Lower leg skin (tissue), 4 donors: ENCODE measurements at regions of chr2 and their contacts with region 1.

Region 1: GRCh38 chr2:222707689-222708525 is 36.4 kb downstream of the MOGAT1 start:
- DNase-seq: peak; percentile 59 to 97
- H3K4me3 ChIP-seq: no peak overlapping the region
- CTCF ChIP-seq: peak in 1 of 3 donors; percentile 84
- POLR2A ChIP-seq: no peak

Region 2: GRCh38 chr2:221289389-221289788 is 1418.5 kb before region 1 on chr2:
- intact Hi-C with region 1: no loop called
- DNase-seq: no peak
- H3K4me3 ChIP-seq: no peak overlapping the region
- CTCF ChIP-seq: no peak
- POLR2A ChIP-seq: no peak

Region 3: DNA sequence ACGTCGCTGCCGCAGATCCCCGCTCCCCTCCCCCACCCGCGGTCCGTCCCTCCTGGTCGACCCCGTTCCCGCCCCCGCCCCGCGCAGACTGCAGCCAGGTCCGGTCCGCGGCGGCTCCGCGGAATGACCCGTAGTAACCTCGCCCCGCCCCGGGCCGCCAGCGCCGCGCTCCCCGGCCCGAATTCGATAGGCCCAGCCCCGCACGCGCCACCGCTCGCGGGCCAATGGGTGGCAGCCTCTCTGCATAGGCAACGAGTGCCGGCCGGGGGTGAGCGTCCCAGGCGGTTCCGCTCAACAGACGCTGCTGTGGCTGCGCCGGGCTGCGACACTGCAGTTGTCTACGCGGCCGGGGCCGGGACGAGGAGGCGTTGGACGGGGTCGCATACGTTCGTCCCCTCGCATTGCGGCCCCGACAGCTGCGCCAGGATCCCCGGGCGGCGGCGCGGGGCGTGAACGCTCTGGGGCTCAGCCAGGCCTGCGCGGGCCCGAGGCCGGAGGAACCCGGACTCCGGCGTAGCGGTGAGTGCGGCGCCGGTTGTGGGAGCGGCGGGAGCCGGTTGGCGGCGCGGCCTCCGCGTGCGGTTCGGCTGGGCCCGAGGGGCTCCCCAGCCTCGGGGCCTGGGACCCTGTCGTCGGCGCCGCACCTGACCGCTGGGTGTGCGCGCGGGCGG is 153.0 kb after region 1 on chr2 and contains the start of gene ACSL3:
- intact Hi-C with region 1: loop called (anchors 10 kb)
- DNase-seq: peak; percentile 95 to 99
- H3K4me3 ChIP-seq: peak within 1 kb of the TSS; percentile 81
- CTCF ChIP-seq: peak in 1 of 3 donors; percentile 71
- POLR2A ChIP-seq: peak in 1 of 2 donors; percentile 89
- total RNA-seq, gene ACSL3: 32.6 to 132 (median 69.6) TPM

Region 4: GRCh38 chr2:222903234-222904220 is 195.6 kb after region 1 on chr2:
- intact Hi-C with region 1: loop called (anchors 10 kb)
- DNase-seq: peak in 1 of 2 donors; percentile 27
- H3K4me3 ChIP-seq: no peak overlapping the region
- CTCF ChIP-seq: peak in 1 of 3 donors; percentile 29
- POLR2A ChIP-seq: no peak